A549 (cell line): ENCODE measurements at regions of chr19 and their contacts with region 1.

Region 1: GRCh38 chr19:14118165-14119051 is 846 bp upstream of the PRKACA start:
- DNase-seq: no peak
- ATAC-seq: peak in 1 of 2 experiments; percentile 2; a peak in 3 of 6 replicates
- H3K4me3 ChIP-seq: peak overlapping the region; percentile 50
- H3K27ac ChIP-seq: peak overlapping the region; percentile 92 to 96
- H3K4me1 ChIP-seq: peaks cover 19% of the 10 kb centered on the region
- CTCF ChIP-seq: no peak
- EP300 ChIP-seq: no peak
- POLR2A ChIP-seq: no peak
- RAD21 ChIP-seq: no peak

Region 2: GRCh38 chr19:14035709-14036108 is 82.7 kb before region 1 on chr19:
- CTCF ChIA-PET with region 1: no interaction called
- POLR2A ChIA-PET with region 1: no interaction called
- DNase-seq: no peak
- ATAC-seq: no peak
- H3K4me3 ChIP-seq: no peak overlapping the region
- H3K27ac ChIP-seq: no peak overlapping the region
- H3K4me1 ChIP-seq: peaks cover 4% of the 10 kb centered on the region; the same call in 1 of the 3 replicates
- CTCF ChIP-seq: no peak
- EP300 ChIP-seq: no peak
- POLR2A ChIP-seq: no peak
- RAD21 ChIP-seq: no peak

Region 3: DNA sequence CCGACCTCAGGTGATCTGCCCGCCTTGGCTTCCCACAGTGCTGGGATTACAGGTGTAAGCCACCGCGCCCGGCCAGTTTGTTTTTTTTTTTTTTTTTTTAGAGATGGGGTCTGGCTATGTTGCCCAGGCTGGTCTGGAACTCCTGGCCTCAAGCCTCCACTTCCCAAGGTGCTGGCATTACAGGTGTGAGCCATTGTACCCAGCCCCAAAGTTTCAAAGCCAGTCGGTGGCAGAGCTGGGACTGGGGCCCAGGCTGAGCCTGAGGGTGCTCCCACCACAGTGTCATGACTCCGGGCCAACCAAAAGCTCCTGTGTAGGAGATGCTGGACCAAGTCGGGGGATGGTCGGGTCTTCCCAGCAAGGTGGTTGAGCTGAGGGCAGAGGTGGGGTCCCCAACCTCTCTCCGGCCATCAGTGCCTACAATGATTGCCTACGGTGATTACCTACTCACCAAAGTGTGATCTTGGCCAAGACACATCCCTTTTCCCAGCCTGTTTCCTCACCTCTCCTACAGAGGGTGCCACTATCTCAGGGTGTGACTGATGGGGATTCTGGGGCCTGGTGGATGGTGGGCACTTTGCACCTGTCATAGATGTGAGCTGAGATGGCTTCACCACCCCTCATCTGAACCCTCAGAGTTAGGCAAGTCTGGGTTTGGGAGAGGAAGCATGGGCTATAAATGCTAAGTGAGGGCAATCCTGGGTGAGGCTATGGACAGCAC is 22.0 kb before region 1 on chr19:
- CTCF ChIA-PET with region 1: interaction called, 25 read pairs
- POLR2A ChIA-PET with region 1: no interaction called
- DNase-seq: no peak
- ATAC-seq: peak; percentile 51 to 70; a peak in 3 of 6 replicates
- H3K4me3 ChIP-seq: no peak overlapping the region
- H3K27ac ChIP-seq: no peak overlapping the region
- H3K4me1 ChIP-seq: 0 out of 3 replicates have a peak, but pooled peaks cover 4% of the 10 kb centered on the region
- CTCF ChIP-seq: no peak
- EP300 ChIP-seq: no peak
- POLR2A ChIP-seq: no peak
- RAD21 ChIP-seq: 0 out of 5 replicates have a peak, but pooled peaks of 1 of the 2 experiments have one; percentile 23